ENCODE measurements at regions of chr2 and their contacts with region 1.

Region 1: DNA sequence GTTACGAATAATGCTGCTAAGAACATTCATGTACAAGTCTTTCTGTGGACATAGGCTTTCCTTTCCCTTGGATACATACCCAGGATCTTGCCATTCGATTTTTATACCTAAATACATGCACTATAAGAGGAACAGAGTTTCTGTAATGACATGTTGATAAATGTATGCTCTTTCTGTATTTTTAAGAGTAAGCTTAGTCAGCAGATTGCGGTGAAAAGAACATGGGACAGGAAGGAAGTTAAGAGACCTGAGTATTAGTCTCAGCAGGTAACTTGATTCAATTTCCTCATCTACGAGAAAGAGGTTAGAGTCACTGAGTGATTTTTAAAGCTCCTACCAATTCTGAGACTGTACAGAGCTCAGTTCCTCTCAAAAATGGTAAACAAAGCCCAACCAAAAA is 2.6 kb upstream of the TLK1 start:
- DNase-seq: peak; percentile 10
- H3K4me3 Mint-ChIP-seq: peak overlapping the region; percentile 42
- H3K27ac Mint-ChIP-seq: peak overlapping the region; percentile 78
- H3K4me1 Mint-ChIP-seq: peaks cover 37% of the 10 kb centered on the region
- H3K27me3 Mint-ChIP-seq: peaks cover 3% of the 10 kb centered on the region

Region 2: GRCh38 chr2:171174071-171174850 is 11.0 kb after region 1 on chr2:
- CTCF ChIA-PET with region 1: interaction called, 12 read pairs
- POLR2A ChIA-PET with region 1: no interaction called
- DNase-seq: no peak
- H3K4me3 Mint-ChIP-seq: no peak overlapping the region
- H3K27ac Mint-ChIP-seq: no peak overlapping the region
- H3K4me1 Mint-ChIP-seq: peaks cover 8% of the 10 kb centered on the region
- H3K27me3 Mint-ChIP-seq: no peaks in the 10 kb centered on the region

Measured in activated CD4-positive, alpha-beta T cell treated with anti-CD3 and anti-CD28 coated beads, Interleukin-2, amount 10 ng/mL, durations not matched to agents 7 days and 5 days (primary cell).